T-cell (primary cell): ENCODE measurements at regions of chr4 and their contacts with region 1.

Region 1: DNA sequence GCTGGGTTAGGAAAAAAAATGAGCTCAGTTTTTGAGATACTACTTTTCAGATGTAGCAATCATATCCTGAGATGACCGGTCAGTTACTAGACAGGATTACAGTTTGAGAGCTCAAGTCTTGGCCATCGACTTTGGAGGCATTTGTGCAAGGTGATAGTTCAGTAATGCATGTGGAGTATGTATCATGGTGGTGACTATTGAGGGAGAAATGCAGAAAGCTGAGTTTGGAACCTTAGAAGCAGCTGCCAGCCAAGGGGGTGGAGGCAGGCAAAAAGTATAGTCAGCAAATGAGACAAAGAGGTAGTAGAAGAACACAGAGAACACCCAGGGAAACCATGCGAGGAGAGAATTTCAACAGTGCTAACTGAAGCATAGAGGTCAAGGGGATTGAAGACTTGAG is 48.7 kb upstream of the SLC4A4 start:
- DNase-seq: no peak
- ATAC-seq: no peak
- H3K4me3 ChIP-seq: no peak overlapping the region
- H3K4me3 Mint-ChIP-seq: no peak overlapping the region
- H3K27ac ChIP-seq: no peak overlapping the region
- H3K27ac Mint-ChIP-seq: no peak overlapping the region
- H3K4me1 ChIP-seq: no peaks in the 10 kb centered on the region
- H3K4me1 Mint-ChIP-seq: no peaks in the 10 kb centered on the region
- H3K27me3 ChIP-seq: no peaks in the 10 kb centered on the region
- H3K27me3 Mint-ChIP-seq: no peaks in the 10 kb centered on the region

Region 2: DNA sequence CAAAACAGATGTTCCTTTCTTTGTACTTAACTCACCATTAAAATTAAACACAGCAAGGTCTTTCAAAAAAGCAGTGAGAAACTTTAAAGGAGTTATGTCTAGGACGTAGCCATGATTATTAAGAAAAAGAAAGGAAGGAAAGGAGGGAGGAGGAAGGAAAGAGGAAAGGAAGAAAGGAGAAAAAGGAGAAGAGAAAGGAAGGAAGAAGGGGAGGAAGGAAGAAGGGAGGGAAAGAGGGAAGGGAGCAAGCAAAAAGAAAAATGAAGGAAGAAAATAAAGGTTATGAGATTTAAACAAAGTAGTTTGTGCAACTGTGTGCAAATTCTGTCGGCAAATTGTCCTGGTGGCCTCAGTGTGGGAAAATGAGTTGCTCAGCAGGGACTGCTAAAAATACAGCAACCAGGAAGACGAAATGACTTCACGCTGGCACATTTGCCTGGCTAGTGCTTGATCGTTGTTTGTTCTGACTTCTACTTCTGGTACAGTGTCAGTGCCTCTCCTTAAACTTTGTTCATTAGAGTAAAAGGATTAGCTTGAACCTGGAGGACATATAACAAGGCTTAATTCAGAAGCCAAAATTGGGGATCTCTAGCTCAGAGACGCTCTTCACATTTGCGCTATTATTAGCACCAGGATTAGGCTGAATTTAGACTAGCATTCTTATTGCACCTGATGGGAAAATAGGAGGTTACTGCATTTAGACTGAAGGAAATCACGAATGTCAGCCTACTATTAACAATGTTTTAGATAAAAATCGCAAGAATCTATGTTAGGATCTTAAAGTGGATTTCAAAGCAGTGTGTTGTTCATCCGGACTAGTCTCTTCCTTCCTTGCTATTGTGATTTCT is 215.4 kb before region 1 on chr4:
- CTCF ChIA-PET with region 1: no interaction called
- POLR2A ChIA-PET with region 1: no interaction called
- DNase-seq: no peak
- ATAC-seq: no peak
- H3K4me3 ChIP-seq: no peak overlapping the region
- H3K4me3 Mint-ChIP-seq: no peak overlapping the region
- H3K27ac ChIP-seq: no peak overlapping the region
- H3K27ac Mint-ChIP-seq: no peak overlapping the region
- H3K4me1 ChIP-seq: no peaks in the 10 kb centered on the region
- H3K4me1 Mint-ChIP-seq: peaks cover 0 to 4% (median 3%) of the 10 kb centered on the region in 3 donors
- H3K27me3 ChIP-seq: peaks cover 0 to 12% of the 10 kb centered on the region in 2 experiments
- H3K27me3 Mint-ChIP-seq: peaks cover 7 to 16% of the 10 kb centered on the region in 2 donors

Region 3: DNA sequence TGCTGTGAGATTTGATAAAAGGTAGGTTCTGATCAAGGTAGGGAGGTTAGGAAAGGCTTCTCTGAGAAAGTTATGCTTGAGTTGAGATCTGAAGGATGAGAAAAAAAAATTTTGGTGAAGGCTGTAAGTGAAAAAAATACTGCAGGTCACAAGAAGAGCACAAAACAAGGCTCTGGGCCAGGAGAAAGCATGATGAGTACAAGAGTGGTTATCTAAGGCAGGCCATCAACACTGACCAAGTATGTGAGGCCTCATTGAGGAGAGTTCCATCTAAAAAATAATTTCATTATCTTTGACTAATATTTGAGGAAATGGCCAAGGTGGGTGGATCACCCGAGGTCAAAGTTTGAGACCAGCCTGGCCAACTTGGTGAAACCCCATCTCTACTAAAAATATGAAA is 22.8 kb before region 1 on chr4:
- CTCF ChIA-PET with region 1: interaction called in 1 of 2 experiments, 4 read pairs
- POLR2A ChIA-PET with region 1: interaction called in 1 of 2 experiments, 10 read pairs
- DNase-seq: no peak
- ATAC-seq: no peak
- H3K4me3 ChIP-seq: no peak overlapping the region
- H3K4me3 Mint-ChIP-seq: no peak overlapping the region
- H3K27ac ChIP-seq: no peak overlapping the region
- H3K27ac Mint-ChIP-seq: no peak overlapping the region
- H3K4me1 ChIP-seq: peaks cover 0 to 5% of the 10 kb centered on the region in 2 experiments
- H3K4me1 Mint-ChIP-seq: peaks cover 3 to 10% (median 7%) of the 10 kb centered on the region in 3 donors
- H3K27me3 ChIP-seq: no peaks in the 10 kb centered on the region
- H3K27me3 Mint-ChIP-seq: peaks cover 0 to 4% of the 10 kb centered on the region in 2 donors

Region 4: GRCh38 chr4:71501992-71502391 is 211.9 kb after region 1 on chr4:
- CTCF ChIA-PET with region 1: no interaction called
- POLR2A ChIA-PET with region 1: no interaction called
- DNase-seq: no peak
- ATAC-seq: no peak
- H3K4me3 ChIP-seq: no peak overlapping the region
- H3K4me3 Mint-ChIP-seq: no peak overlapping the region
- H3K27ac ChIP-seq: no peak overlapping the region
- H3K27ac Mint-ChIP-seq: no peak overlapping the region
- H3K4me1 ChIP-seq: no peaks in the 10 kb centered on the region
- H3K4me1 Mint-ChIP-seq: no peaks in the 10 kb centered on the region
- H3K27me3 ChIP-seq: no peaks in the 10 kb centered on the region
- H3K27me3 Mint-ChIP-seq: peaks cover 2% of the 10 kb centered on the region in 2 donors